Mammary epithelial cell (primary cell): ENCODE measurements at regions of chr11 and their contacts with region 1.

Region 1: GRCh38 chr11:108647701-108648527 is 17.0 kb upstream of the DDX10 start:
- DNase-seq: peak; percentile 85
- H3K4me3 ChIP-seq: no peak overlapping the region
- H3K27ac ChIP-seq: peak overlapping the region; percentile 68
- H3K4me1 ChIP-seq: peaks cover 17% of the 10 kb centered on the region
- H3K27me3 ChIP-seq: no peaks in the 10 kb centered on the region
- CTCF ChIP-seq: peak; percentile 86 to 91

Region 2: GRCh38 chr11:108121274-108122155 is 526.4 kb before region 1 on chr11 and contains the start of gene ACAT1:
- CTCF ChIA-PET with region 1: no interaction called
- dilution Hi-C with region 1: no loop called
- in situ Hi-C with region 1: loop called (anchors 5 to 25 kb)
- intact Hi-C with region 1: loop called (anchors 1 kb)
- DNase-seq: peak; percentile 89
- H3K4me3 ChIP-seq: peak within 1 kb of the TSS; percentile 76 to 96 (median 96)
- H3K27ac ChIP-seq: peak within 1 kb of the TSS; percentile 72
- H3K4me1 ChIP-seq: peaks cover 12% of the 10 kb centered on the region
- H3K27me3 ChIP-seq: no peaks in the 10 kb centered on the region
- CTCF ChIP-seq: peak in 1 of 2 donors; percentile 21
- total RNA-seq, gene ACAT1: 35.0 to 35.6 TPM

Region 3: GRCh38 chr11:108289699-108290098 is 358.2 kb before region 1 on chr11:
- CTCF ChIA-PET with region 1: no interaction called
- dilution Hi-C with region 1: no loop called
- in situ Hi-C with region 1: no loop called
- intact Hi-C with region 1: no loop called
- DNase-seq: no peak
- H3K4me3 ChIP-seq: no peak overlapping the region
- H3K27ac ChIP-seq: no peak overlapping the region
- H3K4me1 ChIP-seq: no peaks in the 10 kb centered on the region
- H3K27me3 ChIP-seq: no peaks in the 10 kb centered on the region
- CTCF ChIP-seq: no peak

Region 4: GRCh38 chr11:108302121-108302785 is 345.7 kb before region 1 on chr11:
- CTCF ChIA-PET with region 1: no interaction called
- dilution Hi-C with region 1: no loop called
- in situ Hi-C with region 1: no loop called
- intact Hi-C with region 1: loop called (anchors 10 kb)
- DNase-seq: peak; percentile 57
- H3K4me3 ChIP-seq: no peak overlapping the region
- H3K27ac ChIP-seq: no peak overlapping the region
- H3K4me1 ChIP-seq: peaks cover 5% of the 10 kb centered on the region
- H3K27me3 ChIP-seq: no peaks in the 10 kb centered on the region
- CTCF ChIP-seq: no peak

Region 5: DNA sequence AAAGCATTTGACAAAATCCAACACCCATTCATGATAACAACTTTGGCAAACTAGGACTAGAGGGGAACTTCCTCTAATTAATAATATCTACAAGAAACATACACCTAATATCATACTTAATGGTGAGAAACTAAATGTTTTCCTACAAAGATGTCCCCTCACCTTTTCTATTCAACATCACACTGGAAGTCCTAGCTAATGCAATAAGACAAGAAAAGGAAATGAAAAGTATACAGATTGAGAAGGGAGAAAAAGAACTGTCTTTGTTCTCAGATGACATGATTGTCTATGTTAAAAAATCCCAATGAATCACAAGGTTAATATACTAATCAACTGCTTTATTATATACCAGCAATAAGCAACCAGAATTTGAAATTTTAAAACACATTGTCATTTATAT is 233.0 kb before region 1 on chr11:
- CTCF ChIA-PET with region 1: no interaction called
- dilution Hi-C with region 1: no loop called
- in situ Hi-C with region 1: loop called in 1 of 2 experiments (anchors 10 kb)
- intact Hi-C with region 1: loop called (anchors 1 kb)
- DNase-seq: no peak
- H3K4me3 ChIP-seq: no peak overlapping the region
- H3K27ac ChIP-seq: no peak overlapping the region
- H3K4me1 ChIP-seq: no peaks in the 10 kb centered on the region
- H3K27me3 ChIP-seq: no peaks in the 10 kb centered on the region
- CTCF ChIP-seq: no peak

Region 6: GRCh38 chr11:108498816-108499408 is 149.0 kb before region 1 on chr11:
- CTCF ChIA-PET with region 1: no interaction called
- dilution Hi-C with region 1: no loop called
- in situ Hi-C with region 1: no loop called
- intact Hi-C with region 1: loop called (anchors 2 kb)
- DNase-seq: no peak
- H3K4me3 ChIP-seq: no peak overlapping the region
- H3K27ac ChIP-seq: no peak overlapping the region
- H3K4me1 ChIP-seq: peaks cover 16% of the 10 kb centered on the region
- H3K27me3 ChIP-seq: no peaks in the 10 kb centered on the region
- CTCF ChIP-seq: no peak

Region 7: GRCh38 chr11:108593214-108593922 is 54.5 kb before region 1 on chr11 and contains the start of gene EXPH5:
- CTCF ChIA-PET with region 1: interaction called, 4 read pairs
- dilution Hi-C with region 1: no loop called
- in situ Hi-C with region 1: loop called in 1 of 2 experiments (anchors 5 kb)
- intact Hi-C with region 1: loop called (anchors 1 kb)
- DNase-seq: peak; percentile 98
- H3K4me3 ChIP-seq: peak within 1 kb of the TSS; percentile 69 to 90 (median 77)
- H3K27ac ChIP-seq: peak within 1 kb of the TSS; percentile 89
- H3K4me1 ChIP-seq: peaks cover 15% of the 10 kb centered on the region
- H3K27me3 ChIP-seq: no peaks in the 10 kb centered on the region
- CTCF ChIP-seq: peak in 1 of 2 donors; percentile 16
- total RNA-seq, gene EXPH5: 17.0 to 27.7 TPM

Region 8: DNA sequence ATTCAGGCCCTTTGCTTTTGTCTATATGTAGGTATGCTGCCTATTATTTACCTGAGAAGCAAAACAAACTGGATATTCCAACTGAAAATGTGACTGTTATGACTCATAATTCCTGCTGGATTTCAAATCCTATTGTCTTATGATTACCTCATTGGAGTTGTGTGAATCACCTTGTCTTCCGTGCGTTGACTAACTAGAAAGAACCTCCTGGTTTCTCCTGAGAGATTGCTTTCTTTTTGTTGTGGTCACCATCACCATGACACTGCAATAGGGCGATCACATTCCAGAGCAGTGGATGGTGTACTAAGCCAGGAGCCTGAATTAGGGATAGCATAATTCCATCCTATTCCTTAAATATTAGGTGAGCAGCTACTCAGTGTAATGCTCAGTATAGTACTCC is 31.3 kb before region 1 on chr11:
- CTCF ChIA-PET with region 1: no interaction called
- dilution Hi-C with region 1: no loop called
- in situ Hi-C with region 1: no loop called
- intact Hi-C with region 1: loop called (anchors 2 kb)
- DNase-seq: peak; percentile 99
- H3K4me3 ChIP-seq: no peak overlapping the region
- H3K27ac ChIP-seq: peak overlapping the region; percentile 97
- H3K4me1 ChIP-seq: peaks cover 37% of the 10 kb centered on the region
- H3K27me3 ChIP-seq: no peaks in the 10 kb centered on the region
- CTCF ChIP-seq: no peak

Region 9: DNA sequence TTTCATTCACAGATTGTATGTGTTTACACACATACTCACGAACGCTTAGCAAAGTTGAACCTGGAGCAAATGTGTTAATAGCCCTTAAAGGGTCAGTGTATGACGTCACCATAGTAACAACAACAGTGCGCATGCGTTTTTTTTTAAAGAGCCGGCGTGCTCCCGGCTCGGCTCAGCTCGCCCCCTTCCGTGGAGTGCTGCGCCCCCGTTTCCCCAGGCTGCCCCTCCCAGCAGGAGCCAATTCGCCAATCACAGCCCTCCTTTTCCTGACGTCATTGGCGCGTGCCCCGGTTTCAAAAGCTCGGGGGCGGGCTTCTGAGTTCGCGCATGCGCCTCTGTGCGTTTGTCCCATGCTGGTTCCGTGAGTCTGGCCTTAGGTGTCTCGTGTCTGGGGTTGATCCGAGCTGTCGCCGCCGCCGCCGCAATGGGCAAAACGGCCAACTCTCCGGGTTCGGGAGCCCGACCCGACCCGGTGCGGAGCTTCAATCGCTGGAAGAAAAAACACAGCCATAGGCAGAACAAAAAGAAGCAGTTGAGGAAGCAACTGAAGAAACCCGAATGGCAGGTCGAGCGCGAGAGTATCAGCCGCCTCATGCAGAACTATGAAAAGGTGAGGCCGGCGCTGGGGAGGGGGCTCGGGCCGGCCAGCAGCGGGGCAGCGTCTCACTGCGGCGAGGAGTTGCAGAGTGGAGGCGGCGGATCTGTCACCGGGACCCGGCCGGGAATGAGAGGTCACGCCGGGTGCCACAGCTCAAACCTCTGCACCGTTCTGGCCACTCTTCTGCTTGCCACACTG is 17.0 kb after region 1 on chr11 and contains the start of gene DDX10:
- CTCF ChIA-PET with region 1: no interaction called
- dilution Hi-C with region 1: no loop called
- in situ Hi-C with region 1: no loop called
- intact Hi-C with region 1: no loop called
- DNase-seq: peak; percentile 97
- H3K4me3 ChIP-seq: peak within 1 kb of the TSS; percentile 74 to 90 (median 76)
- H3K27ac ChIP-seq: peak within 1 kb of the TSS; percentile 52
- H3K4me1 ChIP-seq: peaks cover 11% of the 10 kb centered on the region
- H3K27me3 ChIP-seq: no peaks in the 10 kb centered on the region
- CTCF ChIP-seq: peak; percentile 7 to 39
- total RNA-seq, gene DDX10: 12.8 to 32.1 TPM

Region 10: GRCh38 chr11:109522111-109522755 is 874.3 kb after region 1 on chr11:
- CTCF ChIA-PET with region 1: no interaction called
- dilution Hi-C with region 1: no loop called
- in situ Hi-C with region 1: no loop called
- intact Hi-C with region 1: no loop called
- DNase-seq: no peak
- H3K4me3 ChIP-seq: no peak overlapping the region
- H3K27ac ChIP-seq: no peak overlapping the region
- H3K4me1 ChIP-seq: peaks cover 15% of the 10 kb centered on the region
- H3K27me3 ChIP-seq: no peaks in the 10 kb centered on the region
- CTCF ChIP-seq: peak; percentile 28 to 32